ENCODE measurements at regions of chr11 and their contacts with region 1.

Region 1: GRCh38 chr11:126194121-126194543 is 17.3 kb downstream of the RPUSD4 start:
- DNase-seq: peak; percentile 51
- H3K4me3 ChIP-seq: no peak overlapping the region
- H3K27ac ChIP-seq: no peak overlapping the region
- H3K27me3 ChIP-seq: no peaks in the 10 kb centered on the region
- CTCF ChIP-seq: peak; percentile 69

Region 2: GRCh38 chr11:125941619-125942611 is 252.2 kb before region 1 on chr11:
- in situ Hi-C with region 1: loop called (anchors 25 kb)
- DNase-seq: no peak
- H3K4me3 ChIP-seq: no peak overlapping the region
- H3K27ac ChIP-seq: no peak overlapping the region
- H3K27me3 ChIP-seq: no peaks in the 10 kb centered on the region
- CTCF ChIP-seq: peak; percentile 90